Pancreas (tissue), 10 donors: ENCODE measurements at regions of chr19 and their contacts with region 1.

Region 1: DNA sequence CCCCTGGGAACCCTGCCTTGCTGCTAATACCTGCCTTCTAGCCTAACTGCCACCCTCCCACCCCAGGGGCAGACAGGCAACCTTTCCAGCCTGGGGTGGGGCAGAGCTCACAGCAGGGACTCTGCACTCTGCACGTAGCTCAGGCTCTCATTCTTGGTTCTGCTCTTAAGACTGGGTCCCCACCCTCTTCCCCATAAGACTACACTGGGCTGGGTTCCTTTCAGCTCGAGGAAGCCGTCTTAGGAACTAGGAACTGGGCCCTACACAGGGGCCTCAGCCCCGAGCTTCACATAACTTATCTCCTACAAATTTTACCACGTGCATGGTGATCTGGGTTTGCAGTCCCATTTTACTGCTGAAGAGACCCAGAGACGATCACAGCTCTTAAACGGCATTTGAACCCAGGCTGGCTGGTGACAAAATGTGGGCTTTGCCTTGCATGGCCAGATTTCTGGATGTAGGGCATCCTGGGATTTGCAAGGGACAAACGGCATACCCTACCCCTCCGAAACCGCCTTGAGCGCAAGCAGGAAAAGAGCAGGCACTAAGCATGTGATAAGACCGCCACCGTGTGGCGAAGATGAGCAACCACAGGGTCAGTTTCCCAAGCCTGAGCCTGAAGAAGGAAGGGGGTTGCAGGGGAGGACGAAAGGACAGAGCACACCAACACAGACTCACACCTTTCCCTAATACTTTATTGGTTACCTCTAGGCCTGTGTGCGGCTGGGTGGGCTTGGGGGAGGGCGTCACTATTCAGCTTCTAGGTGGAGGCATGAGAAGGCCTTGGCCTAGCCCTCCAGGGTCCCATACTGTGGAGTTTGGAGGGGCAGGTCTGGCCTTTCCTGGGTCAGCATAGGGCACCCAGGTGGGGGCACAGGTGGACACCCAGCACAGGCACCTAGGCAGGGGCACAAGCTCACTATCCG is 5.1 kb downstream of the JUNB start:
- DNase-seq: peak in 5 of 6 donors; percentile 71 to 84 (median 80)
- ATAC-seq: peak in 3 of 4 donors; percentile 23 to 34 (median 29)
- H3K4me3 ChIP-seq: no peak overlapping the region
- H3K27ac ChIP-seq: peak overlapping the region in 2 of 4 donors; percentile 23 to 42
- H3K4me1 ChIP-seq: peaks cover 0 to 20% (median 3%) of the 10 kb centered on the region in 3 donors
- H3K27me3 ChIP-seq: no peaks in the 10 kb centered on the region
- CTCF ChIP-seq: peak; percentile 79 to 93 (median 88)

Region 2: DNA sequence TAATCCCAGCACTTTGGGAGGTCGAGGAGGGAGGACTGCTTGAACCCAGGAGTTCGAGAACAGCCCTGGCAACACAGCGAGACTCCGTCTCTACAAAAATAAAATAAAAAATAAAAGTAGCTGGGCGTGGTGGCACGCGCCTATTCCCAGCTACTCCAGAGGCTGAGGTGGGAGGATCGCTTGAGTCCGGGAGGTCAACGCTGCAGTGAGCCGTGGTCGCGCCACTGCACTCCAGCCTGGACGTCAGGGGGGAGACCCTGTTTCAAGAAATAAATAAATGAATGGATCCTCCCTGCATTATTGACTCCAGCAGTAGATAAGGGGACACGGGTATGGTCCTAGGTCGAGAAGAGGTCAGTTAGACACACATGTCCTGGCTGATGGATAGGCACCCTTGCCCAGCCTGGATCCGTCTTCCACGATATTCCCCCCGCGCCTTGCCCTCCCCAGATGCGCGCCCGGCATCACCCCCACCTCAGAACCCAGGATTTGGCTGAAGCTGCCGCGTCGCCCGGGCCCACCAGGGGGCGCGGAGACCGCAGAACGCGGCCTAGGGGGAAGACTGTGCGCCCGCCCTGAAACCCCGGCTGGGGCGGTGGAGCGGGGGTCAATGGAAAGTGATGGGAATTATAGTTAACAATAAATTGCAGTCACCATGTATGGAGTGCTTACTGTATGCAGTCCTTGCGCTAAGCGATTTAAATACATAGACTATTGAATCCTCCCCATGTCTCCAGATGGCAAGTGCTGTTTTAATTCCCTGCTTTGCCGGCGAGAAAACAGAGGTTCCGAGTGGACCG is 19.0 kb before region 1 on chr19:
- intact Hi-C with region 1: loop called in 1 of 3 experiments (anchors 2 kb)
- DNase-seq: peak; percentile 73 to 95 (median 85)
- ATAC-seq: peak; percentile 47 to 71 (median 60)
- H3K4me3 ChIP-seq: peak overlapping the region; percentile 53 to 84 (median 69)
- H3K27ac ChIP-seq: peak overlapping the region; percentile 76 to 97 (median 94)
- H3K4me1 ChIP-seq: peaks cover 5 to 19% (median 10%) of the 10 kb centered on the region in 3 donors
- H3K27me3 ChIP-seq: no peaks in the 10 kb centered on the region
- CTCF ChIP-seq: peak; percentile 85 to 94 (median 89)